A673 (cell line): ENCODE measurements at regions of chr1 and their contacts with region 1.

Region 1: DNA sequence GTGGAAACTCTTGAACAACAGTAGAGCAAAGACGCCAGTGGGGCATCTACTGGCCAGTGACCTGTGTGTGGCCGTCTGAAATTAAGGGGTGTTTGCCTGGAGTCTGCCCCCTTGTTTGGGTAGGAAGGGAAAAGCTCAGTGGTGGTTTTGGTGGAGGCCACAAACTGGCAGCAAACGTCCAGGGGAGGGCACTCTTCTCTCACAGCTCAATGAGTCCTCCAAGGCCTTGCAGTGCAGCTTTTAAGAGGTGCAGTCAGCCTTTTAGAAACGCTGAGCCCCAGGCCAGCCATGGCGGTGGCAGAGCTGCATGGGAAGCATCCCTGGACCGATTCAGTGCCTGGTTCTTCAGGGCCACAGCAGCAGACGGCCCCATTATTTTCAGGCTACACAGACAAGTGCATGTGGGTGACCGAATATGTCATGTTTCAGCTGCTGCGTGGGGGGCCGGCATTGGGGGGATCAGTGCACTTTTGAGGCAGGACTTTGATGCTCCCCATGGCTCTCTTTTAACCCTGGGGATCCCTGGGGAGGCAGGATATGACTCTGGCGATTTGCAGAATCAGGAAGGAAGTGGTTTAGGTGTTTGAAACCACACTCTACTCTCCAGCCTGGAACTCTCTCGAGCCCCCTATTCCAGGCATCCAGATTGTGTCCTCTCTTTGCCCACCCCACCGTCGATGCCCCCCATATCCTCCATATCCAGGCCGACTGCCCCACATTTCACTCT is 414.0 kb downstream of the PRDM2 start:
- DNase-seq: peak; percentile 82
- H3K4me3 ChIP-seq: no peak overlapping the region
- H3K27ac ChIP-seq: peak overlapping the region; percentile 76
- H3K4me1 ChIP-seq: peaks cover 25% of the 10 kb centered on the region
- H3K27me3 ChIP-seq: no peaks in the 10 kb centered on the region
- CTCF ChIP-seq: peak; percentile 83

Region 2: DNA sequence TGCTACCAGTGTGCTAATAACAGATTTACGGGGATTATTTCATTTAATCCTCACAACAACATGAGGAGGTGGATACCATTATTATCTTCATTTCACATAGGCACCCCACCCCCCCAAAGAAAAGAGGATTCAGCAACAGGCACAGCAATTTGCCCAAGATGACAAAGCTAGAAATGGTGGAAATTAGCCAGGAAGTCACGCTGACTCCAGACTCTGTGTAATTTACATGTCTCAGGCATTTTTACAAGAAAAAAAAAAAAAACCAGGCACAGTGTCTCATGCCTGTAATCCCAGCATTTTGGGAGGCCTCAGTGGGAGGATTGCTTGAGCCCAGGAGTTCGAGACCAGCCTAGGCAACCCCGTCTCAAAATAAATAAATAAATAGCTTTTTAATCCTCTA is 451.5 kb before region 1 on chr1:
- CTCF ChIA-PET with region 1: no interaction called
- POLR2A ChIA-PET with region 1: no interaction called
- intact Hi-C with region 1: loop called (anchors 10 kb)
- DNase-seq: peak; percentile 95
- H3K4me3 ChIP-seq: no peak overlapping the region
- H3K27ac ChIP-seq: peak overlapping the region; percentile 73
- H3K4me1 ChIP-seq: peaks cover 34% of the 10 kb centered on the region
- H3K27me3 ChIP-seq: no peaks in the 10 kb centered on the region
- CTCF ChIP-seq: no peak

Region 3: DNA sequence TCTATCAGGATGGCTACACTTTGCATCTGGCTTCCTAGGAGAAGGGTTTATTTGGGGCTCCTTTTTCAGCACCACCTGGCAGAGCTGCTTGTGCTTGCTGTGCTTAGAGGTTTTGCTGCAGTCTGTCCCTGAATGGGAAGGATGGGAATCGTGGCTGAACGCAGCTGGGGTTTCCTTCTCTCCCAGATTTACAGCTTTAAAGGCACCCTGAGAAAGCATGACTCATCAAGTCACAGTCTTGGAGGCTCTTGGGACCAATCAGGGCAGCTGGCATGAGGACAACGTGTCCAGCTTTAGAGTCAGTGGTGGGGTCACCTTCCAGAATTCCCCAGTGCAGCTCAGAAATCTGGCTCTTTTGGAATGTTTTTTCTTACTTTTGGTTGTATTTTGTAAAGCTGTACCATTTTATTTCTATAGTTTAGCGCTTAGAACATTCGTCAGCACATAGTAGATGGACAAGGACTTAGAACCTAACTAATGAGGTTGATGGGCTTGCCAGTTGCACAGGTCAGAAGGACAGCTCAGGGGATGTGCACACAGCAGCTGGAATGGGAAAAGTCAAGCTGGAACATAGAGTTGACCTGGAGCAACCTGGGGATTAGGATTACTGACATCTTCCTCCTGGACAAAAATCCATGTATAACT is 191.4 kb before region 1 on chr1:
- CTCF ChIA-PET with region 1: no interaction called
- POLR2A ChIA-PET with region 1: no interaction called
- intact Hi-C with region 1: no loop called
- DNase-seq: peak; percentile 37
- H3K4me3 ChIP-seq: no peak overlapping the region
- H3K27ac ChIP-seq: peak overlapping the region; percentile 3
- H3K4me1 ChIP-seq: no peaks in the 10 kb centered on the region
- H3K27me3 ChIP-seq: no peaks in the 10 kb centered on the region
- CTCF ChIP-seq: no peak

Region 4: DNA sequence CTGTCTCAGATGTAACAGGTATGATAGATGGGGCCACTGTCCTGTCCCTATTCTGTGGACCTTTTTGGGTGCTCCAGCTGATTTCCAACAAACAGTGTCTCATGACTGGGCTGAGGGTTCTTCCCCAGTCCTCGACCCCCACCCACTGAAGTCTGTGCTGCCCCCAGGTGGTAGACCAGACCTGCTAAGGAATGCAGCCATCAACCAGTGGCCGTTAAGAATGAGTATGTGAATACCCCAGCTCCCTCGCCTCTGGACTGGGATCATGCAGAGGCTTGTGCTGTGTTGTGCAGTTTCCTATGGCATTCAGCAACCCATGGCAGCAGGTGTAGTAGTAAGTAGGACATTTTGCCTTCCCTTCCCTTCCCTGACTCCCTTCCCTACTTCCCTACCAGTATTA is 301.4 kb after region 1 on chr1:
- CTCF ChIA-PET with region 1: interaction called, 4 read pairs
- POLR2A ChIA-PET with region 1: no interaction called
- intact Hi-C with region 1: loop called (anchors 10 kb)
- DNase-seq: peak; percentile 40
- H3K4me3 ChIP-seq: no peak overlapping the region
- H3K27ac ChIP-seq: no peak overlapping the region
- H3K4me1 ChIP-seq: no peaks in the 10 kb centered on the region
- H3K27me3 ChIP-seq: no peaks in the 10 kb centered on the region
- CTCF ChIP-seq: peak; percentile 50

Region 5: GRCh38 chr1:14733048-14733778 is 619.2 kb after region 1 on chr1:
- CTCF ChIA-PET with region 1: no interaction called
- POLR2A ChIA-PET with region 1: no interaction called
- intact Hi-C with region 1: loop called (anchors 10 kb)
- DNase-seq: peak; percentile 69
- H3K4me3 ChIP-seq: peak overlapping the region; percentile 5
- H3K27ac ChIP-seq: peak overlapping the region; percentile 72
- H3K4me1 ChIP-seq: peaks cover 20% of the 10 kb centered on the region
- H3K27me3 ChIP-seq: no peaks in the 10 kb centered on the region
- CTCF ChIP-seq: no peak

Region 6: GRCh38 chr1:15046487-15047165 is 932.6 kb after region 1 on chr1:
- CTCF ChIA-PET with region 1: interaction called, 3 read pairs
- POLR2A ChIA-PET with region 1: no interaction called
- intact Hi-C with region 1: loop called (anchors 5 kb)
- DNase-seq: peak; percentile 66
- H3K4me3 ChIP-seq: no peak overlapping the region
- H3K27ac ChIP-seq: no peak overlapping the region
- H3K4me1 ChIP-seq: no peaks in the 10 kb centered on the region
- H3K27me3 ChIP-seq: no peaks in the 10 kb centered on the region
- CTCF ChIP-seq: peak; percentile 90